ENCODE measurements at regions of chr2 and their contacts with region 1.

Region 1: GRCh38 chr2:53786705-53787612 is at the starts of genes ASB3 and ERLEC1:
- DNase-seq: peak; percentile 90
- H3K4me3 Mint-ChIP-seq: peak within 1 kb of the TSS; percentile 95
- H3K27ac Mint-ChIP-seq: peak within 1 kb of the TSS; percentile 89
- H3K4me1 Mint-ChIP-seq: peaks cover 50% of the 10 kb centered on the region
- H3K27me3 Mint-ChIP-seq: no peaks in the 10 kb centered on the region
- total RNA-seq, gene ASB3: 17.2 to 19.1 TPM
- total RNA-seq, gene ERLEC1: 16.7 to 18.5 TPM

Region 2: GRCh38 chr2:53751728-53752127 is 35.2 kb before region 1 on chr2:
- CTCF ChIA-PET with region 1: no interaction called
- intact Hi-C with region 1: loop called (anchors 1 kb)
- DNase-seq: no peak
- H3K4me3 Mint-ChIP-seq: no peak overlapping the region
- H3K27ac Mint-ChIP-seq: no peak overlapping the region
- H3K4me1 Mint-ChIP-seq: peaks cover 21% of the 10 kb centered on the region
- H3K27me3 Mint-ChIP-seq: no peaks in the 10 kb centered on the region

Region 3: GRCh38 chr2:53865962-53866361 is 79.0 kb after region 1 on chr2:
- CTCF ChIA-PET with region 1: no interaction called
- intact Hi-C with region 1: no loop called
- DNase-seq: no peak
- H3K4me3 Mint-ChIP-seq: no peak overlapping the region
- H3K27ac Mint-ChIP-seq: no peak overlapping the region
- H3K4me1 Mint-ChIP-seq: peaks cover 21% of the 10 kb centered on the region
- H3K27me3 Mint-ChIP-seq: no peaks in the 10 kb centered on the region

Region 4: GRCh38 chr2:53994818-53995808 is 208.2 kb after region 1 on chr2:
- CTCF ChIA-PET with region 1: no interaction called
- intact Hi-C with region 1: loop called (anchors 1 kb)
- DNase-seq: no peak
- H3K4me3 Mint-ChIP-seq: peak overlapping the region; percentile 64
- H3K27ac Mint-ChIP-seq: peak overlapping the region; percentile 85
- H3K4me1 Mint-ChIP-seq: peaks cover 28% of the 10 kb centered on the region
- H3K27me3 Mint-ChIP-seq: no peaks in the 10 kb centered on the region

Region 5: DNA sequence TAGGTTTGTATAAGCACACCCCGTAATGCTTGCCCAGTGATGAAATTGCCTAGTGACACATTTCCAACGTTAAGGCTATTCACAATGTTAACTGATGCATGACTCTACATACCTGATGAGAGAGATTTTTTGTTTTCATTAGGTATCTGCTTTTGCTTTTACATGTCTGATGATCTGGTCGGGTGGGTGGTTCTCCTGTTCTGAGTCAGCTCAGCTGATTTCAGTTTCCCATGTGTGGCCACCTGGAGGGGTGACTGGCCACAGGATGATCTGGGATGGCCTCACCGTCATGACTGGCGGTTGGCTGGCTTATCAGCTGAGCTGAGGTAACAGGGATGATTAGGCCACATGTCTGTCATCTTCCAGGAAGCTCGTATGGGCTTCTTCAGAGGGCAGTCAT is 294.6 kb after region 1 on chr2:
- CTCF ChIA-PET with region 1: no interaction called
- intact Hi-C with region 1: loop called (anchors 2 kb)
- DNase-seq: peak; percentile 31
- H3K4me3 Mint-ChIP-seq: no peak overlapping the region
- H3K27ac Mint-ChIP-seq: no peak overlapping the region
- H3K4me1 Mint-ChIP-seq: no peaks in the 10 kb centered on the region
- H3K27me3 Mint-ChIP-seq: no peaks in the 10 kb centered on the region

Region 6: GRCh38 chr2:54271843-54272627 is 485.1 kb after region 1 on chr2:
- CTCF ChIA-PET with region 1: no interaction called
- intact Hi-C with region 1: loop called (anchors 10 kb)
- DNase-seq: no peak
- H3K4me3 Mint-ChIP-seq: no peak overlapping the region
- H3K27ac Mint-ChIP-seq: no peak overlapping the region
- H3K4me1 Mint-ChIP-seq: peaks cover 15% of the 10 kb centered on the region
- H3K27me3 Mint-ChIP-seq: no peaks in the 10 kb centered on the region

Measured in activated naive CD4-positive, alpha-beta T cell treated with anti-CD3 and anti-CD28 coated beads for 36 hours (primary cell).